Activated naive CD4-positive, alpha-beta T cell treated with anti-CD3 and anti-CD28 coated beads for 36 hours (primary cell): ENCODE measurements at regions of chrX and their contacts with region 1.

Region 1: DNA sequence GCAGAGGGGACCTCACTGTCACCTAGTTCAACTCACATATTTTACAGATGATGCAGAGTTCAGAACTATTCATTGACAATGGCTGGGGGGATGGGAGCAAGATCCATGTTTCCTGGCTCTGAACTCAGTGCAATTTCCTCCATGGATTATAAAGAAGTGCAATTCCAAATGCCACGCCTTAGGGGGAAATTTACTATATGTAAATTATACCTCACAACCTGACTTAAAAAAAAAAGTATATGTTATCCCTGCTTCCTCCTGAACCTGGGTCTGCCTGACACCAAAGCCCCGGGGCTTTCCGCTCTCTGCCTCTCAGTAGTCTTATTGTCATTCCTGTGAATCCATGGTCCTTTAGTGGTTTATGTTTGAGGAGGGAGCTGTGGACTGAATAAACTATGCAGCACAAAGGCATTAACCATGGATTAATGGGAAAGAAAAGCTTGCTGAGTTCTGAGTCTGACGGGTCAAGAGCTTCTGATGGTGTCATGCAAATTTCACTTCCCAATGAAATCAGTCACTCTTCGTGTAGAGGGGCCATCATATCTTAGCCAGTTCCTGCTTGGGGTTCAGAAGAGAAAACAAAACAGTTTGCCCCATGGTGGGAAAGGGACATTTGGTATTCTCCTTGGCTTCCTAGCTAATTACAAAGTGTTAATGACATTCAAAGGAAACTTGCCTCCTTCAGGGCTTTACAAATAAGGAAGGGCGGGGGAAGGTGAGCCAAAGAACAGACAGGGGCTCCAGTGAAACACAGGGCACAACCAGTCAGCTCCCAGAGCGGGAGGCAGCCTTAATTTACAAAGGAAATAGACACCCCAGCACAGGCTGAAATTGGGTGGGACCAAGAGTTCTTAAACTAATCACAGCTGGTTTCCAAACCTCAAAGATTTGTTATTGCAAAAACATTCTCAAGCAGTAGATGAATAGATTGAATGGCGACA is 14.3 kb downstream of the FAM9C start:
- DNase-seq: no peak
- H3K4me3 Mint-ChIP-seq: peak overlapping the region; percentile 52
- H3K27ac Mint-ChIP-seq: peak overlapping the region; percentile 77
- H3K4me1 Mint-ChIP-seq: peaks cover 65% of the 10 kb centered on the region
- H3K27me3 Mint-ChIP-seq: no peaks in the 10 kb centered on the region

Region 2: DNA sequence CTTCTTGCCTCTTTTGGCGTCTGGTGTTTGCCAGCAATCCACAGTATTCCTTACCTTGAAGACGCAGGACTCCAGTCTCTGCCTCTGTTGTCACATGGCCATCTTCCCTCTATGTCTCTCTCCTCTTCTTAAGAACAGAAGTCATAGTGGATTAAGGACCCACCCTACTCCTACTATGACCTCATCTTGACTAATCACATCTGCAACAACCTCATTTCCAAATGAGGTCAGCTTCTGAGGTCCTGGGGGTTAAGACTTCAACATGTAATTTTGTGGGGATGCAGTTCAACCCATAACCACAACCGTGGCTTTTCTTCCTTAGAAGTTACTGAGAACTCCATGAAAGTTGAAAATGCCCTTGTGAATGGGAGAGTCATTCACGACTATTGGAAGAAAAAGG is 100.4 kb before region 1 on chrX:
- CTCF ChIA-PET with region 1: no interaction called
- intact Hi-C with region 1: no loop called
- DNase-seq: no peak
- H3K4me3 Mint-ChIP-seq: no peak overlapping the region
- H3K27ac Mint-ChIP-seq: no peak overlapping the region
- H3K4me1 Mint-ChIP-seq: no peaks in the 10 kb centered on the region
- H3K27me3 Mint-ChIP-seq: no peaks in the 10 kb centered on the region

Region 3: GRCh38 chrX:12984629-12985319 is 45.3 kb before region 1 on chrX:
- CTCF ChIA-PET with region 1: interaction called, 3 read pairs
- intact Hi-C with region 1: loop called (anchors 1 kb)
- DNase-seq: peak; percentile 54
- H3K4me3 Mint-ChIP-seq: peak overlapping the region; percentile 54
- H3K27ac Mint-ChIP-seq: peak overlapping the region; percentile 95
- H3K4me1 Mint-ChIP-seq: peaks cover 77% of the 10 kb centered on the region
- H3K27me3 Mint-ChIP-seq: no peaks in the 10 kb centered on the region

Region 4: DNA sequence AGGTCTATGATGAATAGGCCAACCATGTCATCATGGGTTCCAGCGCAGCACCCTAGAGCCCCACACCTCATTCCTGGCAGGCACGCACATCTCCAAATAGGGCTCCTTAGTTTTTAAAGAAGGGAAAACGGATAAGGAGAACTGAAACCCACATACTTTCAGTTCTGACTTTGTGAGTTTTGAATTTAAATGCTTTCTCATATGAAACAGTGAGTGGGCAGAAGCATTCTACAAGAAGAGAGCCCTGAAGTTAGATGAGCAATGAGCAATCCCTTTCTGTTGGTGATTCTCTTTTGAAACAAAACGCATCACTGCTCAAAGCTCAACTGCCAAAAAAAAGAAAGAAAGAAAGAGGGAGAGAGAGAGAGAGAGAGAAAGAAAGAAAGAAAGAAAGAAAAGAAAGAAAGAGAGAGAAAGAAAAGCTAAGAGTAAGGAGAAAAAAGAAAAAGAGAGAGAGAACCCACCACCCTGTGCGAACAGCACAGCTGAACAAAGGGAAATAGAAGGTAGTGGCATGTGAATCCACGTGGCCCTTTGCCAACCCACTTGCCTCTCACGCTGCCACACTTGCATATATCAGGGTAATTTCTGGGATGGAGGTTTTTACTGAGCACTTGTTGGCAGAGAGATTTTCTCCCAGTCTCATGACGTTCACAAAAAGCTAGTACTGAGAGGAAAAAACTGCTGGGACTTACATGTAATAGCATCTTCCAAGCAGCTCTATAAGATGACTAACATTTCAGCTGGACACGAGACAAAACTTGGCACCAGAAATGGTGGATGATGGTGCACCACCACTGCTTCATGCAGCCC is 24.2 kb before region 1 on chrX:
- CTCF ChIA-PET with region 1: interaction called, 3 read pairs
- intact Hi-C with region 1: loop called (anchors 2 kb)
- DNase-seq: peak; percentile 39
- H3K4me3 Mint-ChIP-seq: peak overlapping the region; percentile 90
- H3K27ac Mint-ChIP-seq: peak overlapping the region; percentile 99
- H3K4me1 Mint-ChIP-seq: peaks cover 70% of the 10 kb centered on the region
- H3K27me3 Mint-ChIP-seq: no peaks in the 10 kb centered on the region

Region 5: GRCh38 chrX:13013363-13014110 is 16.6 kb before region 1 on chrX:
- CTCF ChIA-PET with region 1: no interaction called
- intact Hi-C with region 1: loop called (anchors 1 kb)
- DNase-seq: peak; percentile 47
- H3K4me3 Mint-ChIP-seq: peak overlapping the region; percentile 51
- H3K27ac Mint-ChIP-seq: peak overlapping the region; percentile 53
- H3K4me1 Mint-ChIP-seq: peaks cover 70% of the 10 kb centered on the region
- H3K27me3 Mint-ChIP-seq: no peaks in the 10 kb centered on the region

Region 6: GRCh38 chrX:13064599-13065143 is 34.6 kb after region 1 on chrX:
- CTCF ChIA-PET with region 1: no interaction called
- intact Hi-C with region 1: no loop called
- DNase-seq: no peak
- H3K4me3 Mint-ChIP-seq: no peak overlapping the region
- H3K27ac Mint-ChIP-seq: no peak overlapping the region
- H3K4me1 Mint-ChIP-seq: peaks cover 40% of the 10 kb centered on the region
- H3K27me3 Mint-ChIP-seq: no peaks in the 10 kb centered on the region

Region 7: GRCh38 chrX:13376857-13377549 is 346.9 kb after region 1 on chrX:
- CTCF ChIA-PET with region 1: no interaction called
- intact Hi-C with region 1: no loop called
- DNase-seq: peak; percentile 24
- H3K4me3 Mint-ChIP-seq: no peak overlapping the region
- H3K27ac Mint-ChIP-seq: no peak overlapping the region
- H3K4me1 Mint-ChIP-seq: peaks cover 25% of the 10 kb centered on the region
- H3K27me3 Mint-ChIP-seq: no peaks in the 10 kb centered on the region